Breast epithelium (tissue), 4 donors: ENCODE measurements at regions of chr17 and their contacts with region 1.

Region 1: GRCh38 chr17:9714801-9715200 is 69.5 kb downstream of the USP43 start:
- DNase-seq: no peak
- H3K4me3 ChIP-seq: no peak overlapping the region
- H3K27ac ChIP-seq: no peak overlapping the region
- H3K4me1 ChIP-seq: no peaks in the 10 kb centered on the region
- H3K27me3 ChIP-seq: no peaks in the 10 kb centered on the region
- CTCF ChIP-seq: no peak
- POLR2A ChIP-seq: no peak

Region 2: DNA sequence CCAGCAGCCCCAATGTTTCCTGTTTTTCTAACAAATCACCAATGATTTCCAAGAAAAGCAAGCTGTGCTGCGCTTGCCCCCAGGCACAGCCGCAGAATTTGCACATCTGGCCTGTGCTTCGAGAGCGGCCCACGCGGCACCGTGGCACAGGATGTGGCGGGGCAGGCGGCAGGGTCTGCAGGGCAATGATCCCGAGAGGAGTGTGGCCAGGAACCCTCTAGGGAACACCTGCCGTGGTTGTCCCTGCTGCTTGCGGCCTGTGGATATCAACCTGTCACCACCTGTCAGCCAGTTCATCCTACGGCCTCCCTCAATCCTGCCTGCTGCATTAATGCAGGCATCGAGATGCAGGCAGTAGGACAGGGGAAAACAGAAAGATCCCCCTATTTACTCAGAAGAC is 773.3 kb before region 1 on chr17:
- intact Hi-C with region 1: loop called (anchors 5 kb)
- DNase-seq: no peak
- H3K4me3 ChIP-seq: no peak overlapping the region
- H3K27ac ChIP-seq: no peak overlapping the region
- H3K4me1 ChIP-seq: no peaks in the 10 kb centered on the region
- H3K27me3 ChIP-seq: no peaks in the 10 kb centered on the region
- CTCF ChIP-seq: no peak
- POLR2A ChIP-seq: no peak

Region 3: GRCh38 chr17:9239793-9240658 is 474.8 kb before region 1 on chr17:
- intact Hi-C with region 1: no loop called
- DNase-seq: peak; percentile 67 to 73
- H3K4me3 ChIP-seq: peak overlapping the region; percentile 52 to 78 (median 66)
- H3K27ac ChIP-seq: peak overlapping the region; percentile 96 to 97
- H3K4me1 ChIP-seq: peaks cover 0 to 5% of the 10 kb centered on the region in 2 donors
- H3K27me3 ChIP-seq: no peaks in the 10 kb centered on the region
- CTCF ChIP-seq: no peak
- POLR2A ChIP-seq: peak; percentile 37